Esophagus muscularis mucosa (tissue), 4 donors: ENCODE measurements at regions of chr20 and their contacts with region 1.

Region 1: GRCh38 chr20:5205348-5206210 is 78.8 kb downstream of the CDS2 start:
- DNase-seq: no peak
- H3K4me3 ChIP-seq: no peak overlapping the region
- H3K27ac ChIP-seq: no peak overlapping the region
- H3K4me1 ChIP-seq: peaks cover 0 to 9% (median 7%) of the 10 kb centered on the region in 4 donors
- H3K27me3 ChIP-seq: no peaks in the 10 kb centered on the region
- CTCF ChIP-seq: peak; percentile 71 to 92 (median 71)
- EP300 ChIP-seq: no peak
- POLR2A ChIP-seq: no peak

Region 2: DNA sequence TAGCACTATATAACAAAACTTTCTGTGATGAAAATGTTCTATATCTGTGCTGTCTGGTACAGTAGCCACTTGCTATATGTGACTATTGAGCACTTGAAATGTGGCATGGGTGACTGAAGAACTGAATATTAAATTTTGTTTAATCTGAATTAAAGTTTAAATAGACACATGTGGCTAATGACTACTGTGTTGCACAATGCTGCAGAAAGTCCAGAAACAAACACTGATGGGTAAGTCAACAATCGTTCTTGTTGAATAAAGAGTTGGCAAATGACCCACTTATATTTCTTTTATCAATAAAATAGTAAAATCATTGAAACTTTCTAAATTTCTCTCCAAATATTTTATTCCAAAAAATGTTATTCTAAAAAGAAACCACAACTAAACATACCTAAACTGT is 29.4 kb after region 1 on chr20:
- intact Hi-C with region 1: no loop called
- DNase-seq: no peak
- H3K4me3 ChIP-seq: no peak overlapping the region
- H3K27ac ChIP-seq: no peak overlapping the region
- H3K4me1 ChIP-seq: no peaks in the 10 kb centered on the region
- H3K27me3 ChIP-seq: no peaks in the 10 kb centered on the region
- CTCF ChIP-seq: no peak
- EP300 ChIP-seq: no peak
- POLR2A ChIP-seq: no peak

Region 3: DNA sequence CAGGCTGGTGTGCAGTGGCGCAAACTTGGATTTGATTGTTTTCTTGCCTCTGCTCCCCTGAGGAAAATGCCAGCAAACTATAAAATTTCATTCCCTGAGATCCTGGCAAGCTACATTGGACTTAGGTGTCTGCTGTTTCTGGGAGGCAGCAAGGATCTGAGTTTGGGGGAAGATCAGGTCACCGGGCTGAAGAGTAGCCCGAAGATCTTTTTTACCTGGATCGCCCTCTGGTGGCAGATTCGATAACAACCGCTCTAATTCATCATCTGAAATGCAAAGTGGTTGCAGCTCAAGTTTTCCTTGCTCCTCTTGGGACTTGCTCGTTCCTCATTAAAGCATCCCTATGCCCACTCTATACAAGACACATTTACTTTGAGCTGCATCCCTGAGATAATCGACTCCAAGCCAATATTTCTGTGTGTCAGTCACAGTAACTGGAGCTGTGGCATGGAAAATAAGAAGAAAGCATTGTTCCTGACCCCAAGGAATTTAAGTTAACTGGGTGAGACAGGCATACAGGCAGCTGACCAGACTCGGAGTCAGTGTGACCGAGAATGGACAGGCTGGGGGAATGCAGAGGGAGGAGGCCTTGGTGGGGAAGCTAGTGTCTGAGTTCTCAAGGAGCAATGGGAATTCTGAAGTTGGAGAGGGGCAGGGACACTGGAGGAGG is 243.0 kb after region 1 on chr20:
- intact Hi-C with region 1: loop called (anchors 10 kb)
- DNase-seq: peak; percentile 90
- H3K4me3 ChIP-seq: no peak overlapping the region
- H3K27ac ChIP-seq: no peak overlapping the region
- H3K4me1 ChIP-seq: no peaks in the 10 kb centered on the region
- H3K27me3 ChIP-seq: peaks cover 0 to 13% (median 0%) of the 10 kb centered on the region in 4 donors
- CTCF ChIP-seq: peak; percentile 41 to 68 (median 56)
- EP300 ChIP-seq: no peak
- POLR2A ChIP-seq: no peak

Region 4: DNA sequence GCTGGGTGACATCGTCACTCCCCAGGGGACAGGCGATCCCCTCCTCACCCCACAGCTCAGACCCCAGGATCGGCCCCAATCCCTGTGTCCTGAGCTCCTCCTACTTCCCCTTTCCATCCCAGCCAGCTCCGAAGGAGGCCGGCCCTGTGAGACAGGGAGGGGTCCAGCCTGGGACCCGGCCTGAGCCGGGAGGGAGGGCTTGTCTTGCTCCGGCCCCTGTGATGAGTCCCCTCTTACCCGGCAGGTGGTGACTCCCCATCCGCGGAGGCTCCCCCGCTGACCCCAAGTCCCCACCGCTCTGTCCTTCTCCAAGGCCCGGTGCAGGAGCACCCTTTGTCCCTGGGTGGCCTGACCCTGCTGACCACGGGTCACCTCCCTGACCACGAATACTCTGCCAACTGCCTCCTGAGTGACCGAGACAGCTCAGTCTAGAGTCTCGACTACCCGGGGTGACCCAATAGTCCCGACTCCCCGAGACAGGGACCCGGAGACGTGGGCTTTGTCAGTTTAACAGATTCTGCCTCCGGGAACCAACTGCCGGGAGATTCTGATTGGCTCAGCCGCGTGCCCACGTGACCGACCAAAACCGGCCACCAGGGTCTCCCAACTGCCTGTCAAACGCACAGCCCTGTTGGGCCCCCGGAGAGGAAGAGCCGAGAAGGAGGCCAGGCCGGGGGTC is 298.6 kb after region 1 on chr20:
- intact Hi-C with region 1: no loop called
- DNase-seq: peak; percentile 93
- H3K4me3 ChIP-seq: peak overlapping the region; percentile 68 to 72 (median 70)
- H3K27ac ChIP-seq: peak overlapping the region; percentile 52 to 80 (median 74)
- H3K4me1 ChIP-seq: peaks cover 0 to 10% (median 4%) of the 10 kb centered on the region in 4 donors
- H3K27me3 ChIP-seq: no peaks in the 10 kb centered on the region
- CTCF ChIP-seq: peak in 1 of 3 experiments; percentile 17
- EP300 ChIP-seq: no peak
- POLR2A ChIP-seq: no peak